Activated CD4-positive, alpha-beta memory T cell treated with anti-CD3 and anti-CD28 coated beads for 36 hours (primary cell): ENCODE measurements at regions of chr1 and their contacts with region 1.

Region 1: GRCh38 chr1:235011599-235012435 is 116.8 kb downstream of the TOMM20 start:
- DNase-seq: peak; percentile 99
- H3K4me3 Mint-ChIP-seq: peak overlapping the region; percentile 56
- H3K27ac Mint-ChIP-seq: peak overlapping the region; percentile 97
- H3K4me1 Mint-ChIP-seq: peaks cover 90% of the 10 kb centered on the region
- H3K27me3 Mint-ChIP-seq: peaks cover 2% of the 10 kb centered on the region

Region 2: GRCh38 chr1:234730770-234731568 is 280.8 kb before region 1 on chr1:
- CTCF ChIA-PET with region 1: interaction called, 8 read pairs
- POLR2A ChIA-PET with region 1: interaction called, 27 read pairs
- intact Hi-C with region 1: loop called (anchors 1 kb)
- DNase-seq: peak; percentile 78
- H3K4me3 Mint-ChIP-seq: peak overlapping the region; percentile 40
- H3K27ac Mint-ChIP-seq: peak overlapping the region; percentile 99
- H3K4me1 Mint-ChIP-seq: peaks cover 77% of the 10 kb centered on the region
- H3K27me3 Mint-ChIP-seq: no peaks in the 10 kb centered on the region

Region 3: GRCh38 chr1:234871710-234872271 is 140.0 kb before region 1 on chr1:
- CTCF ChIA-PET with region 1: no interaction called
- POLR2A ChIA-PET with region 1: no interaction called
- intact Hi-C with region 1: no loop called
- DNase-seq: no peak
- H3K4me3 Mint-ChIP-seq: no peak overlapping the region
- H3K27ac Mint-ChIP-seq: no peak overlapping the region
- H3K4me1 Mint-ChIP-seq: peaks cover 34% of the 10 kb centered on the region
- H3K27me3 Mint-ChIP-seq: no peaks in the 10 kb centered on the region

Region 4: DNA sequence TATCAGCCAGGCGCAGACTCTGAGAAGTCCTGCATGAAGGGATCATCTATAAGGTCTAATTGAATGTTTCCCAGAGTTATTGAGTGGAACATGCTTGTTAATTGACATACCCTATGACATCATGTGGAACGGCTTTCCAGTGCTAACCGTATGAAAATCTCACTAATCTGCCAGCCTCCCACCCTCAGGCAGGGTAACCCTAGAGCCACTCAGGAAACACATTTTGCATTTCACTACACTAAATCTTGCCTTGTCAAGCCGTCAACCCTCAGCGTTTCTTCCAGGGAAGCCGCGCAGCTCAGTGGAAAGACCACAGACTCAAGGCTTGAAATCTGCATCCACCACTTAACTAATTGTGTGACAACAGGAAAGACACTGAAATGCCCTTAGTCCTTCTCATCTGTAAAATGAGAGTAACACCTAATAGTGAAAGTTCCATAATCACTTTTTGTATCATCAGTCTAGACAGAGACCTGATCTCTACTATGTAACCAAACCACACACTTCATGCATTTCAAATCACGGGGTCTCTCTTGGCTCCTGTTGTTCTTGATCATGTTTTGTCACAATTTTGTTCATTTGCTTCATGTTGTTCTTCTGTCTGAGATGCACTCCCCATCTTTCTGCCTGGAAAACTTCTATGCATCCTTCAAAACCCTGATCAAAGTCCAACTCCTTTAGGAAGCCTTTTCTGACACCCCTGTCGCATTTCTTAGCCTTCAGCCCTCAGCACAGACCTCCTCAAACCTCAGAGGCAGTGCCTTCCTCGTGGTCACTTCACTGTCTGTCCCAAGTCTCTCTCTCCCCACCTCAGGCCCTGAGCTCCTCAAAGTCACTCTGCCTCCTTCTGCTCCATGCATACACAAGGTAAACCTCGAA is 129.7 kb before region 1 on chr1:
- CTCF ChIA-PET with region 1: no interaction called
- POLR2A ChIA-PET with region 1: no interaction called
- intact Hi-C with region 1: loop called (anchors 1 kb)
- DNase-seq: peak; percentile 72
- H3K4me3 Mint-ChIP-seq: no peak overlapping the region
- H3K27ac Mint-ChIP-seq: peak overlapping the region; percentile 59
- H3K4me1 Mint-ChIP-seq: peaks cover 40% of the 10 kb centered on the region
- H3K27me3 Mint-ChIP-seq: no peaks in the 10 kb centered on the region

Region 5: GRCh38 chr1:234963180-234963903 is 48.5 kb before region 1 on chr1:
- CTCF ChIA-PET with region 1: interaction called, 4 read pairs
- POLR2A ChIA-PET with region 1: interaction called, 12 read pairs
- intact Hi-C with region 1: loop called (anchors 1 kb)
- DNase-seq: peak; percentile 97
- H3K4me3 Mint-ChIP-seq: peak overlapping the region; percentile 63
- H3K27ac Mint-ChIP-seq: peak overlapping the region; percentile 98
- H3K4me1 Mint-ChIP-seq: peaks cover 67% of the 10 kb centered on the region
- H3K27me3 Mint-ChIP-seq: no peaks in the 10 kb centered on the region

Region 6: DNA sequence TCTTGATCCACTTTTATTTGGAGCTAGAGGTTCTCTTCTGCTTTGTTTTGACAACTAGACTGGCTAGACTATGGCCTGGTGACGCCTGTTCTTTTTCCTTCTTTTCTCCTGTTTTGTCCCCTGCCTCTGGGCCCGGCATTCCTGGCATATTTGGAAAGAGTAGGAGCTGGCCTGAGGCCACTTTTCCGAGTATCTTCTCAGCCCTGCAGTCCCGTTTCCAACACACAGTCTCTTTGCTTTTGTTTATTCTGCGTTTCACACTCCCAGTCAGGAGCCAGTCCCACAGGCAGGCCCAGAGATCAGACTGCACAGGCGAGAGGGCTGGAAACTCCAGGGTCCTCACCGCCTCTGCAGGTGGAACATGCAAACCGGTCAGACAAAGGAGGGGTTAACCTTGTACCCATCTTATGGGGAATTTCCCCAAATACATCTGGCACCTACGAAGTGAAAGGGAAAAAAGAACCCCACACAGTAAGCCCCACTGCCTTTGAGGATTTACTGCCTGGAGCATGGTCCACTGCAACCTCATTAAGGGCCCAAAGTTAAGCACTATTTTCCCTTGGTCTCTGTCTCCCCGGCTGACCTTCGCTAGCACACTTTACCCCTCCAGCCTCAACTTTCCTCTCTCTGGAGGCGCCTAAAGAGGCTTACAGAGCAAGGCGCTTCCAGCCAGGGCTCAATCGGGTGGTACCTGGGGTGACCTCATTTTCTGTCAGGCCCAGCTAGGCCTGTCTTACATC is 24.2 kb before region 1 on chr1:
- CTCF ChIA-PET with region 1: interaction called, 3 read pairs
- POLR2A ChIA-PET with region 1: interaction called, 18 read pairs
- intact Hi-C with region 1: loop called (anchors 1 kb)
- DNase-seq: peak; percentile 56
- H3K4me3 Mint-ChIP-seq: peak overlapping the region; percentile 4
- H3K27ac Mint-ChIP-seq: peak overlapping the region; percentile 85
- H3K4me1 Mint-ChIP-seq: peaks cover 76% of the 10 kb centered on the region
- H3K27me3 Mint-ChIP-seq: no peaks in the 10 kb centered on the region

Region 7: GRCh38 chr1:235075188-235075926 is 63.5 kb after region 1 on chr1:
- CTCF ChIA-PET with region 1: interaction called, 4 read pairs
- POLR2A ChIA-PET with region 1: interaction called, 36 read pairs
- intact Hi-C with region 1: loop called (anchors 1 kb)
- DNase-seq: peak; percentile 95
- H3K4me3 Mint-ChIP-seq: peak overlapping the region; percentile 74
- H3K27ac Mint-ChIP-seq: peak overlapping the region; percentile 99
- H3K4me1 Mint-ChIP-seq: peaks cover 32% of the 10 kb centered on the region
- H3K27me3 Mint-ChIP-seq: no peaks in the 10 kb centered on the region